Right ventricle myocardium inferior (tissue), 1 donor: ENCODE measurements at regions of chr1 and their contacts with region 1.

Region 1: DNA sequence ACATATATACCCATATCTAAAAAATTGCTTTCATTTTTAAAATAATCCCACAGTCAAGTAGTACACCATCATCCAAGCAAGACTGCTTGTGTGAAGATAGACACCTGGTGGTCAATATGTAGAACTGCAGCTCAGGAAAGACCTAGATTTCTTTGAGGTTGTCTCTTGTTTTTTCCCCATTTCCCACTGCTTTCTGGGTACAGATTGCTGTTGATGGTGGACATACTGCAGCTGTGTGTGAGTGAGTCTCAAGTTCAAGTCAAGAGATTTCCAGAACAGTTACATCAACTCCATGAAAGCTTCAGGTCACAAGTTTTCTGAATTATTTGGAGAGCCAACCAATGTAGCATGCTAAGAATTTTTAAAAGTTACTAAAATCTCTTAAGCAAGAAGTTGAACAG is 306.4 kb downstream of the DUSP10 start:
- DNase-seq: no peak
- ATAC-seq: peak; percentile 72

Region 2: DNA sequence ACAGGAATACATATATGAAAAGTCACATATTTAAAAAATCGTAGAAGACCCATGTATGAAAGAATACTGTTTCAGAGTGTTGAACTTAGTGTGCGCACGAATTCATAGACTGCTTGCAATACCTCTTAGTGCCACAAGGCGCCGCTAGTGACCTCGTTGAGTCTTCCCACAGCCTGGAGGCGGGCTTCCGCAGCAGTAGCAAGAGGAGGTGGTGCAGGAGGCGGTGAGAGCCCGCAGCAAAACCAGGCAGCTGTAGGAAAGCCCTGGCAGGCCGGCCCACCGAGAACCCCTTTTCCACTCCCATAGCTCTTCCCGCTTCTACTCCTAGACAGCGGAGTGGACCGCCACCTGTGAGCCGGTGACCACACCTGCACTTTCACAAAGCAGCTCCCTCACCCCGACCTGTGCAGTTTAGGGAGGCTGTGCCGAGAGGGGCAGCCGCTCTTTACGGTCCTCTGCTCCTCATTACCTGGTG is 625.3 kb before region 1 on chr1:
- intact Hi-C with region 1: loop called (anchors 5 kb)
- DNase-seq: peak; percentile 91
- ATAC-seq: peak; percentile 77

Region 3: GRCh38 chr1:220873868-220874655 is 561.4 kb before region 1 on chr1:
- intact Hi-C with region 1: loop called (anchors 2 kb)
- DNase-seq: no peak
- ATAC-seq: peak; percentile 21

Region 4: DNA sequence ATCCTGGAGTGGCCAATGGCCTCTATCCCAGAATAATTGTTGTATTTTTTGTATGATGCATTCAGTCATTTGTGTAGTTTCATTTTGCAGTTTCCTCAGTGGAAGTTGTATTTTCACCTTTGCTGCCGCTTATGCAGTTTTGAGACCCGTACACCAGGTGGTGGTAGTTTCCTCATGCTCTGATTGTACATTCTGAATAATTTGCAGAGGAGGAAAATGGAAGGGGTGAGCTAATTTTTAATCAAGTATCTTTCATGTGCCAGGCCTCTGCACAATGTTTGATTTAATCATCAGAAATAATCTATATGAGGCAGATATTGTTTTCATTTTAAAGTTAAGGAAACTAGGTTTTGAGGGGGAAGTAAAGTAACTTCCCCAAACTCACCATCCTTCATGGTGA is 526.7 kb before region 1 on chr1:
- intact Hi-C with region 1: loop called (anchors 10 kb)
- DNase-seq: no peak
- ATAC-seq: no peak

Region 5: GRCh38 chr1:221263831-221264767 is 171.4 kb before region 1 on chr1:
- intact Hi-C with region 1: loop called (anchors 5 kb)
- DNase-seq: no peak
- ATAC-seq: peak; percentile 48